ENCODE measurements at regions of chr9 and their contacts with region 1.

Region 1: GRCh38 chr9:136533775-136534157 is 12.1 kb downstream of the NOTCH1 start:
- H3K4me3 Mint-ChIP-seq: peak overlapping the region; percentile 45
- H3K27ac Mint-ChIP-seq: peak overlapping the region; percentile 75
- H3K4me1 Mint-ChIP-seq: peaks cover 71% of the 10 kb centered on the region
- H3K27me3 Mint-ChIP-seq: peaks cover 19% of the 10 kb centered on the region

Region 2: DNA sequence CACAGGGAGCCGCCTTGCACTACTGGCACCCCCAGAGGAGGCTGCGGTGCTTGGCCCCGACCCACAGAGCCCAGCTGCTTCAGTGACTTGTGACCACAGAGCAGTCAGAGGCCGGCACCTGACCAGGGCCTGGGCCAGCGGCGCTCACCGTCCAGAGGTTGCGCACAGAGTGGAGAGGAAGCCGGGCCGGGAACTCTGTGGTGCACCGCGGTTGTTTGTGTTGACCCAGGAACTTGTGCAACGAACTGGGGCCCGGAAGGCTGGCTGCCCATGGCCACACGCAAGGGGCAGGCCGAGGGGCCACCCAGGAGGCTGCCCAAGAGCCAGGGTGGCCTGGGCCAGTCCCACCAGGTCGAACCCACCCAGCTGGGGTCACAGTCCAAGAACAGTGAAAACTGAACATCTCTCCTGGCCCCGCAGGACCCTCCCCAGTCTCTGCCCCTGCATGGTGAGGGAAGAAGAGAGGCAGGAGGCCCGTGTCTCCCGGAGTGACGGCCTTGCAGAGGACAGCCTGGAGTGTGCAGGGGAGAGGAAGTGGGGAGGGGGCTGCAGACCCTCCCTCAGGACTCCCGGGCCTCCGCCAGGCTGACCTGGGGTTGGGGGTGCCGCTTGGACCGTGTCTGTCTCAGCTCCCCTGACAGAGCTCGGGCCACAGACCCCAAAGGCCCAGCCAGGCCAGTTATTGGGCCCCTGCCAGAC is 86.1 kb after region 1 on chr9:
- intact Hi-C with region 1: loop called (anchors 5 kb)
- H3K4me3 Mint-ChIP-seq: peak overlapping the region; percentile 42
- H3K27ac Mint-ChIP-seq: peak overlapping the region; percentile 71
- H3K4me1 Mint-ChIP-seq: peaks cover 72% of the 10 kb centered on the region
- H3K27me3 Mint-ChIP-seq: peaks cover 51% of the 10 kb centered on the region

Measured in dendritic cell treated with granulocyte-macrophage colony-stimulating factor and Interleukin-4, amounts not matched to agents 40 ng/mL and 50 ng/mL, for 4 days (primary cell).